A549 (cell line): ENCODE measurements at regions of chr6 and their contacts with region 1.

Region 1: DNA sequence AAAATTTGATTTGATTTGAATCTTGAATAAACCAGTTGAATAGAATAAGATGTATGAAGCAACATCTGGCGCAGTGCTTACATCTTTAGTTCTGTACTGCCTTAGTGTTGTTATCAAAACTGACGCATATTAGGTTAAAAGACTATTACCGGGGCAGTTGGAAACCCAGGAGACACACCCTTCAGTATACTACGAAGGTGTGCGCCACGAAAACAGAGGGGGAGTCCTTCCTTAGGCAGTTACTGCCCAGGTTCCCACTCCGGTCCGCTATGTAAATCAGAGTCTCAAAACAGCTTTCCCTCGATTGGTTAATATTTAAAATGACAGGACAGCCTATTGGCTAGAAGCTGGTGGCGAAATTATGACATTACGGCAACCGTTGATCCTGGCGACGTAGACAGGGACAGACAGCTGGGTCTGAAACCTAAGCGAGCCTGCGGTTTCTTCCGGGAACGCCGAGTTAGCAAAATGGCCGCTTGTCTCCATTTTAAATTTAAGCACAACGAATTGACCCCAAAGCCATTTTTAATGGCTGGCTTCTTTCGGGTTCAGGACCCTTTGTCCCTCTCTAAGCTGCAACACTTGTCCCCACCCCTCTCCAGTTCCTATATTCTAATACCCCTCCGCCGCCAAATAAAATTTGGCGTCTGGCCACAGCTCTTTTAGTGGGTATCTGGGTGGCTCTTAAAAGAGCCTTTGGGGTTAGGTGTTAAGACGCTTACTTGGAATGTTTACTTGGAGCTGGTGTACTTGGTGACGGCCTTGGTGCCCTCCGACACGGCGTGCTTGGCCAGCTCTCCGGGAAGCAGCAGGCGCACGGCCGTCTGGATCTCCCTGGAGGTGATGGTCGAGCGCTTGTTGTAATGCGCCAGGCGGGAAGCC is 35.8 kb downstream of the HFE start:
- DNase-seq: peak; percentile 77 to 99
- ATAC-seq: peak; percentile 72 to 73
- H3K4me3 ChIP-seq: peak overlapping the region; percentile 93
- H3K27ac ChIP-seq: peak overlapping the region; percentile 98
- H3K4me1 ChIP-seq: peaks cover 45% of the 10 kb centered on the region
- CTCF ChIP-seq: no peak
- EP300 ChIP-seq: peak; percentile 52 to 62; a peak in 3 of 5 replicates
- POLR2A ChIP-seq: peak; percentile 72
- RAD21 ChIP-seq: 0 out of 5 replicates have a peak, but pooled peaks of 1 of the 2 experiments have one; percentile 1

Region 2: GRCh38 chr6:25874822-25875562 is 248.0 kb before region 1 on chr6:
- CTCF ChIA-PET with region 1: no interaction called
- POLR2A ChIA-PET with region 1: no interaction called
- DNase-seq: no peak
- ATAC-seq: peak; percentile 43 to 63
- H3K4me3 ChIP-seq: no peak overlapping the region
- H3K27ac ChIP-seq: peak overlapping the region; percentile 91 to 92
- H3K4me1 ChIP-seq: peaks cover 43% of the 10 kb centered on the region
- CTCF ChIP-seq: no peak
- EP300 ChIP-seq: 0 out of 5 replicates have a peak, but pooled peaks of 1 of the 2 experiments have one; percentile 16
- POLR2A ChIP-seq: no peak
- RAD21 ChIP-seq: no peak

Region 3: GRCh38 chr6:26031595-26032339 is 91.3 kb before region 1 on chr6:
- CTCF ChIA-PET with region 1: interaction called, 3 read pairs
- POLR2A ChIA-PET with region 1: interaction called, 70 read pairs
- DNase-seq: peak; percentile 86 to 97
- ATAC-seq: peak; percentile 68 to 78
- H3K4me3 ChIP-seq: peak overlapping the region; percentile 56
- H3K27ac ChIP-seq: peak overlapping the region; percentile 95 to 100
- H3K4me1 ChIP-seq: peaks cover 38% of the 10 kb centered on the region
- CTCF ChIP-seq: no peak
- EP300 ChIP-seq: no peak
- POLR2A ChIP-seq: peak; percentile 96
- RAD21 ChIP-seq: no peak

Region 4: DNA sequence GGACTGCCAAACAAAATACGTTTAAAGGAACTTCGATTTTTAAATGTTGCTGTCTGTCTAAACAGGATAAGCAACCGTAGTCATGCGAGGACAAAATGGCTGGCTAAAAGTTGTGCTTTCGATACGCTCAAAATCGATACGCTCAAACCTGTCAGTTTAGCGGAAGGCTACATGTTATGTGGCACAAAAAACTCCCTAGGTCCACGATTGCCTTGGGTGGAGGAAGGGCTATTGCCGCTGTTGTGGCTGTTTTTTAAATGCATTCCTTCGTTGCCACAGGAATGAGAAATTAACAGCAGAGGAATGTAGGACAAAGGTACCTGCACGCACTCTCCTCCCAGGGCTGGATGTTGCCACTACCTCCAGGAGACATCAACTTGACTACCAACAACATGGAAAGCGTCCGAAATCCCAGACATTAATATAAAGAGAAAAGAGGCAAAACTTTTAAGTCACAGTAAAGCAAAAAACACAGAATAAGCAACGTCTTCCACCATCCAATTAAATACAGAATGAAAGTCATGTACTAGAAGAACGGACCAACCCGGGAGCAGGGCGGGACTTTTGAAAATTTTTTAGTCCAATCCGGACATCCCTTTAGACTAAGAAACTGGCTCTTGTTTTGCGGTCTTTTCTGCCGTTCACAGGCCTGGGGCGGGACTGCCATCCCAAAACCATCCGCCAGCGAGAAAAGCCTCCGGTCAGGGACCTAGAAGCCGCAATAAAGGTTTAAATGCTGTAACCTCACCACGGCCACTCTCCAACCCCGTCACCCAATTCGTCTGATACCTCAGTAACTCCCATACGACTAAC is 68.0 kb before region 1 on chr6:
- CTCF ChIA-PET with region 1: no interaction called
- POLR2A ChIA-PET with region 1: interaction called, 32 read pairs
- DNase-seq: peak; percentile 70 to 91
- ATAC-seq: peak; percentile 68 to 83
- H3K4me3 ChIP-seq: peak overlapping the region; percentile 76
- H3K27ac ChIP-seq: peak overlapping the region; percentile 95 to 100
- H3K4me1 ChIP-seq: peaks cover 19% of the 10 kb centered on the region
- CTCF ChIP-seq: no peak
- EP300 ChIP-seq: no peak
- POLR2A ChIP-seq: peak; percentile 66
- RAD21 ChIP-seq: no peak; a peak in 1 of 5 replicates

Region 5: GRCh38 chr6:26103770-26104456 is 19.1 kb before region 1 on chr6:
- CTCF ChIA-PET with region 1: interaction called, 5 read pairs
- POLR2A ChIA-PET with region 1: interaction called, 145 read pairs
- DNase-seq: peak; percentile 57 to 93
- ATAC-seq: peak; percentile 88 to 93
- H3K4me3 ChIP-seq: peak overlapping the region; percentile 43
- H3K27ac ChIP-seq: peak overlapping the region; percentile 87 to 92
- H3K4me1 ChIP-seq: peaks cover 19% of the 10 kb centered on the region
- CTCF ChIP-seq: peak; percentile 18; the same call in 2 of the 3 replicates
- EP300 ChIP-seq: peak; percentile 51 to 56; a peak in 2 of 5 replicates
- POLR2A ChIP-seq: peak; percentile 99
- RAD21 ChIP-seq: 0 out of 5 replicates have a peak, but pooled peaks have one; percentile 11 to 14

Region 6: DNA sequence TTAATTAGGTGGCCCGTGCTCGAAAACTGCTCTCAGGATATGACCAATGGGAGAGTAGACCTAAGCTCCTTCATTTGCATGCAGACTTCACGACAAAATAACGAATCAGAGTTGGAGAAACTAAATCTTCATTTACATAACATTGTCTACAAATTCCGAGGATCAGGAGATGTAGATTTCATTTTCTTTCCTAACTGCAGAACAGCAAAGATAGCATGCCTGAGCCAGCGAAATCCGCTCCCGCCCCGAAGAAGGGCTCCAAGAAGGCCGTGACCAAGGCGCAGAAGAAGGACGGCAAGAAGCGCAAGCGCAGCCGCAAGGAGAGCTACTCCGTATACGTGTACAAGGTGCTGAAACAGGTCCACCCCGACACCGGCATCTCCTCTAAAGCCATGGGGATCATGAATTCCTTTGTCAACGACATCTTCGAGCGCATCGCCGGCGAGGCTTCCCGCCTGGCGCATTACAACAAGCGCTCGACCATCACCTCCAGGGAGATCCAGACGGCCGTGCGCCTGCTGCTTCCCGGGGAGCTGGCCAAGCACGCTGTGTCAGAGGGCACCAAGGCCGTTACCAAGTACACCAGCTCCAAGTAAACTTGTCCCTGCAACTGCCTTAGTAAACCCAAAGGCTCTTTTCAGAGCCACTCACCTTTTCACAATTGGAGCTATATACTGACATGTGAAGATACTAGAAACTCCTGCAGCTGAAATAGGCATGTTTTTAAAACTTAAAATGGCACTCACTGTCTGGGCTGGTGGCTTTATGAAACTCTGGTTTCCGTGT is 60.7 kb after region 1 on chr6:
- CTCF ChIA-PET with region 1: interaction called, 3 read pairs
- POLR2A ChIA-PET with region 1: interaction called, 12 read pairs
- DNase-seq: peak in 1 of 2 experiments; percentile 84
- ATAC-seq: peak; percentile 80 to 81
- H3K4me3 ChIP-seq: peak overlapping the region; percentile 43
- H3K27ac ChIP-seq: peak overlapping the region; percentile 58 to 87
- H3K4me1 ChIP-seq: peaks cover 13% of the 10 kb centered on the region; the same call in 2 of the 3 replicates
- CTCF ChIP-seq: no peak
- EP300 ChIP-seq: no peak
- POLR2A ChIP-seq: peak; percentile 44
- RAD21 ChIP-seq: no peak